ENCODE measurements at regions of chr11 and their contacts with region 1.

Region 1: GRCh38 chr11:132168344-132168981 is 798.0 kb downstream of the NTM start:
- DNase-seq: no peak
- ATAC-seq: no peak
- H3K4me3 ChIP-seq: no peak overlapping the region
- H3K27ac ChIP-seq: no peak overlapping the region
- H3K4me1 ChIP-seq: no peaks in the 10 kb centered on the region
- H3K27me3 ChIP-seq: no peaks in the 10 kb centered on the region
- CTCF ChIP-seq: no peak
- EP300 ChIP-seq: no peak
- POLR2A ChIP-seq: no peak
- RAD21 ChIP-seq: no peak

Region 2: DNA sequence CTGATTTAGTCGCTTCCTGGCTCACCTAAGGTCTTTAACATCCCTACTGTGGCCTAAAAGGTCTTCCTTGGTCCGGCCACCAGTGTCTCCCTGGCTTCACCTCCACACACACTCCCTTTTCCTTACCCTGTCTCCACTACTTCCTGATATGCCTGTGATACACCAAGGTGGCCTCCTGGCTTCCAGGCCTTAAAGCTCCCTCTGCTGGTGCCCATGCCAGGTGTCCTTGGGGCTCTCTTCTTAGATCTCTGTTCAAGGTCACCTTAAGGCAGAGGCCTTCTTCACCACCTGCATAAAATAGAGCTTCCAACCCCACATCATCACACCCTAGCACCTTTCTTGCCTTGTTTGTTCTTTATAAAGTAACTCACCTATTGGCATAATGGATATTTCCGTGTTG is 10.4 kb before region 1 on chr11:
- CTCF ChIA-PET with region 1: no interaction called
- POLR2A ChIA-PET with region 1: no interaction called
- in situ Hi-C with region 1: no loop called
- intact Hi-C with region 1: loop called (anchors 1 kb)
- DNase-seq: no peak
- ATAC-seq: peak; percentile 54
- H3K4me3 ChIP-seq: no peak overlapping the region
- H3K27ac ChIP-seq: no peak overlapping the region
- H3K4me1 ChIP-seq: no peaks in the 10 kb centered on the region
- H3K27me3 ChIP-seq: no peaks in the 10 kb centered on the region; a peak in 1 of 5 replicates
- CTCF ChIP-seq: 0 out of 2 replicates have a peak, but pooled peaks have one; percentile 27
- EP300 ChIP-seq: no peak
- POLR2A ChIP-seq: no peak
- RAD21 ChIP-seq: no peak

Measured in HepG2 (cell line).